Endothelial cell of umbilical vein (primary cell): ENCODE measurements at regions of chr12 and their contacts with region 1.

Region 1: DNA sequence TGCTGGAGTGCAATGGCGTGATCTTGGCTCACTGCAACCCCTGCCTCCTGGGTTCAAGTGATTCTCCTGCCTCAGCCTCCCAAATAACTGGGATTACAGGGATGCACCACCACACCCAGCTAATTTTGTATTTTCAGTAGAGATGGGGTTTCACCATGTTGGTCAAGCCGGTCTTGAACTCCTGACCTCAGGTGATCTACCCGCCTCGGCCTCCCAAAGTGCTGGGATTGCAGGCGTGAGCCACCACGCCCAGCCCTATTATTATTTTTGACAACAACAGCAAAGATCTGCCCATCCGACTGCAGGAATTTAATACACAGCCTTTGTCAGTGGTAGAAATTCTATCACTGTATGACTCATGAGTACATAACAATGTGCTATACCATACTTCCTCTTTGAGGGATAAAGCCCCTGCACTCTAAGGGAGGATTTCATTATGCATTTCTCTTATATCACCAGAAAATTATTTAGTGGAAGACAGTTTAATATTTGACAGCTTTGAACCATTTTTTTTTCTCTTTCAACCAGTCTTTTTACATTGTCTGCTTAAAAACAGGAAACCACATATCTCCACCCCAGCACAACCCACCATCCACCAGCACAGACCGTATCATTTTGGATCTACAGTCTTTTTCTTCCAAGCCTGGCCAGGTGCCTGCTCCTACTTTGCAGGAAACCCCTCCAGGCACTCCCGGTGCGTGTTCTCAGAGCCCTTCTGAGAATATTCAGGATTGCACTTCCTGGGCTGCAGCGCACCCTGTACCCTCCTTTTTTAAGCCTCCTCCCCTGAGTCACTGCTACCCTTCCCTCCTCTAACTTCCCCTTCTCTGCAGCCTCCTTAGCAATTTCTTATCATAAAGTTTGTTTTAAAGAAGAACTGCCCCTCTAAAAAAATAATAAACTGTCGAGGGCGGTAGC is 594 bp downstream of the ARHGDIB start:
- DNase-seq: peak; percentile 83
- H3K4me3 ChIP-seq: peak overlapping the region; percentile 57 to 78 (median 64)
- H3K27ac ChIP-seq: peak overlapping the region; percentile 80
- H3K4me1 ChIP-seq: peaks cover 52% of the 10 kb centered on the region
- H3K27me3 ChIP-seq: no peaks in the 10 kb centered on the region
- CTCF ChIP-seq: no peak
- POLR2A ChIP-seq: no peak

Region 2: GRCh38 chr12:14365294-14366208 is 595.3 kb before region 1 on chr12 and contains the start of gene ATF7IP:
- CTCF ChIA-PET with region 1: no interaction called
- POLR2A ChIA-PET with region 1: no interaction called
- dilution Hi-C with region 1: no loop called
- intact Hi-C with region 1: loop called (anchors 5 kb)
- DNase-seq: peak; percentile 97
- H3K4me3 ChIP-seq: peak within 1 kb of the TSS; percentile 53 to 98 (median 98)
- H3K27ac ChIP-seq: peak within 1 kb of the TSS; percentile 89
- H3K4me1 ChIP-seq: peaks cover 17% of the 10 kb centered on the region
- H3K27me3 ChIP-seq: no peaks in the 10 kb centered on the region
- CTCF ChIP-seq: no peak
- POLR2A ChIP-seq: peak; percentile 81
- total RNA-seq, gene ATF7IP: 72.4 and 73.5 TPM in 2 replicates

Region 3: GRCh38 chr12:14803011-14803829 is 157.6 kb before region 1 on chr12 and contains the starts of genes C12orf60 and WBP11:
- CTCF ChIA-PET with region 1: no interaction called
- POLR2A ChIA-PET with region 1: interaction called, 3 read pairs
- dilution Hi-C with region 1: no loop called
- intact Hi-C with region 1: loop called (anchors 1 kb)
- DNase-seq: peak; percentile 99
- H3K4me3 ChIP-seq: peak within 1 kb of the TSS; percentile 82 to 98 (median 97)
- H3K27ac ChIP-seq: peak within 1 kb of the TSS; percentile 90
- H3K4me1 ChIP-seq: peaks cover 17% of the 10 kb centered on the region
- H3K27me3 ChIP-seq: no peaks in the 10 kb centered on the region
- CTCF ChIP-seq: no peak
- POLR2A ChIP-seq: peak; percentile 92
- total RNA-seq, gene C12orf60: 1.1 and 1.3 TPM in 2 replicates
- total RNA-seq, gene WBP11: 70.5 and 77.1 TPM in 2 replicates

Region 4: GRCh38 chr12:14884458-14884878 is 76.3 kb before region 1 on chr12:
- CTCF ChIA-PET with region 1: no interaction called
- POLR2A ChIA-PET with region 1: no interaction called
- dilution Hi-C with region 1: no loop called
- intact Hi-C with region 1: loop called (anchors 1 kb)
- DNase-seq: peak; percentile 84
- H3K4me3 ChIP-seq: peak overlapping the region; percentile 17 to 64 (median 62)
- H3K27ac ChIP-seq: peak overlapping the region; percentile 49
- H3K4me1 ChIP-seq: peaks cover 38% of the 10 kb centered on the region
- H3K27me3 ChIP-seq: no peaks in the 10 kb centered on the region
- CTCF ChIP-seq: no peak
- POLR2A ChIP-seq: no peak

Region 5: DNA sequence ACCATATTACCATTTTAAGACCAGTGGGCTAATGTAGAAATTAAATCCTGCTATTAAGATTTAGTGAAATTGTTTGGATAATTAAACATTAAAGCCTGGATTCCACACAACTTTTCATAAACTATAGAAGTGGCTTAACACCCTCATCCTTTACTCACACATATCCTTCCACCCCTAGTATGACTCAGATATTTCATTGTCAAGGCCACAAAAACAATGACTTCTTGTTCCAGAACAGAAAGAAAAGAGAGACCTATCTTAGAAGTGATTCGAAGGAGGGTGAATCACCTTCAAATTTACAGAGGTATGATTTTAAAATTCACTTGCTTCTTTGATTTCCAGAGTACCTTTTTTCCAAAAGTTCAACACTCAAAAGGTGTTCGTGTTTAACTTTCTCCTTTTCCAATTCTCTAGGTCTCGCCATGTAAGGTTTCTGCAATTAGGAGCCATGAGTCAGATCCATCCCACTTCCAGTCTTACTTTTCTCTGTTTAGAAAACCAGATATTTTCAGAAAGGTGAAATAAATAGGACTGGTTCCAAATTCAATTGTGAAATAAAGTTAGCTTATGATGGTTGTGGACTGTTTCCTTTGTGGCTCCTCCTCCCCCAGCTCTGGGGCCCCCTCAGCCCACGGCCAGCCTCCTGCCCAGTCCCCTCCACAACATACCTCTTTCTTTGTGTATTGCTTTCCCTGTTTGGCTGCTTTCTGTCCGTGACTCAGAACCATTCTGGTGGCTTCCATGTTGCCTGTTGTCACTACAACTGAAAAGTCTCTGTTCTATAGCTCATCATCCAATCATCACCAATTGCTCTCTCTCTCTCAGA is 50.5 kb before region 1 on chr12:
- CTCF ChIA-PET with region 1: no interaction called
- POLR2A ChIA-PET with region 1: no interaction called
- dilution Hi-C with region 1: no loop called
- intact Hi-C with region 1: loop called (anchors 1 kb)
- DNase-seq: peak; percentile 87
- H3K4me3 ChIP-seq: no peak overlapping the region
- H3K27ac ChIP-seq: peak overlapping the region; percentile 69
- H3K4me1 ChIP-seq: peaks cover 27% of the 10 kb centered on the region
- H3K27me3 ChIP-seq: no peaks in the 10 kb centered on the region
- CTCF ChIP-seq: no peak
- POLR2A ChIP-seq: peak; percentile 32

Region 6: DNA sequence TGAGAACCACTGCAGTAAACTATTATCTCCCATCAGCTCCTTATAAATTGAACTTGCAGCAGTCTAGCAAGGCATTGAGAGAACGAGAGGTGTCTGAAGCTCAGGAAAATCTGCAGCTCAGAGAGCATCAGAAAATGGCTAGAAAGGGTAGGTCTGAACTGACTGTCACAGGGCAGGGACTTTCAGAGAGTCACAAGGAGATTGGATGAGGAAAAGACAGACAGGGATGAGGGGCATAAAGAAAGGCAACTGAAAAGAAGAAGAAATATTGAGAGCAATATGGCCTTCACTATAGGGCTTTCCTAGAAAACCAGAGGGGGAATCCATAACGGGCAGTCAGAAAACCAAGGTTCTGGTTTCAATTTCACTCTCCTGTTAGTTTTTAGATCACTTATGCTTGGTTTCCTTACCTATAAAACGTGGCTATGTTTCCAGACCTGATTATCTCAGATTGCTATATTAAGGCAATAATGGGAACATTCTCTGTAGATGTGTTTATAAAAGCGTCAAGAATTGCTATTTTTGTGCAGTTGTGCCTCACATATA is 52.9 kb after region 1 on chr12:
- CTCF ChIA-PET with region 1: no interaction called
- POLR2A ChIA-PET with region 1: no interaction called
- dilution Hi-C with region 1: no loop called
- intact Hi-C with region 1: no loop called
- DNase-seq: no peak
- H3K4me3 ChIP-seq: no peak overlapping the region
- H3K27ac ChIP-seq: no peak overlapping the region
- H3K4me1 ChIP-seq: no peaks in the 10 kb centered on the region
- H3K27me3 ChIP-seq: peaks cover 5 to 13% of the 10 kb centered on the region in 2 experiments
- CTCF ChIP-seq: no peak
- POLR2A ChIP-seq: no peak